Heart left ventricle (tissue), 16 donors: ENCODE measurements at regions of chr2 and their contacts with region 1.

Region 1: DNA sequence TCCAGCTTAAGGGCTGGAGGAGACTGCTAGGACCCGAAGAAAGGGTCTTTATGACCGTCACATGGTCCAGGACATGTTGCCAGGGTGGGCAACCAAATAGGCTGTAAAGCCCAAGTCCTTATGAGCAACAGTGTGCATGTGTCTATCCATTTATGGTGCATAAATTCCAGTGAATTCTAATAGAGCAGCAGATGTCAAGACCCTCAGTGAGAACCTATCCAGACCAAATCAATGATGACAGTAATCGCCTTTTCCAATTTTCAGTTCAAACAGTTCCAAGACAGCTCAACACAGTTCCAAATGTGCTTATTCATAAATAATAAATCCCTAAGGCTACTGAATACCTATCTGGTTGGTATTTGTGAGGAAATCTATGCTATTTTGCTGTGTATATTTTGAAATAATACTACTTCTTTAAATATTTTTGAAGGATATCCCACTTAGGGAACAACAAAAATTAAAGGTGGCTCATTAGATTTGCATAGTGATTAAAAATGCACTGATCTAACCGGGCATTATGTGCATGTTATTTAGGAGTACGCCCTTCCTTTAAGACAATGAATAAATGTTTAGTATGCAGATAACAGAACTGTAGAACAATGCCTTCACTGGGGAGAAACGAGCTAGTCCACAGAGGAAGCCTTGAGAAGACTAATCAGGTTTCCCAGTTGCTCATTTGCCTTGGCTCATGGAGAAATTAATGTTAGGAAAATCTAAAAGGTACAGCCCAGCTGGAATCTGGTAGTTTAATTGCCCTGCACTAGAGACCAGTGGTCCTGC is 519.5 kb upstream of the CHAC2 start:
- DNase-seq: no peak
- ATAC-seq: peak; percentile 42 to 90 (median 66)
- H3K4me3 ChIP-seq: no peak overlapping the region
- H3K27ac ChIP-seq: peak overlapping the region in 8 of 12 donors; percentile 8 to 70 (median 48)
- H3K4me1 ChIP-seq: peaks cover 0 to 11% (median 0%) of the 10 kb centered on the region in 12 donors
- H3K27me3 ChIP-seq: no peaks in the 10 kb centered on the region
- CTCF ChIP-seq: no peak
- POLR2A ChIP-seq: no peak

Region 2: GRCh38 chr2:53170466-53170865 is 77.7 kb before region 1 on chr2:
- intact Hi-C with region 1: loop called in 1 of 10 experiments (anchors 5 kb)
- DNase-seq: no peak
- ATAC-seq: peak in 3 of 4 donors; percentile 13 to 72 (median 32)
- H3K4me3 ChIP-seq: no peak overlapping the region
- H3K27ac ChIP-seq: peak overlapping the region in 1 of 12 donors; percentile 32
- H3K4me1 ChIP-seq: peaks cover 0 to 12% (median 0%) of the 10 kb centered on the region in 12 donors
- H3K27me3 ChIP-seq: no peaks in the 10 kb centered on the region
- CTCF ChIP-seq: no peak
- POLR2A ChIP-seq: no peak

Region 3: DNA sequence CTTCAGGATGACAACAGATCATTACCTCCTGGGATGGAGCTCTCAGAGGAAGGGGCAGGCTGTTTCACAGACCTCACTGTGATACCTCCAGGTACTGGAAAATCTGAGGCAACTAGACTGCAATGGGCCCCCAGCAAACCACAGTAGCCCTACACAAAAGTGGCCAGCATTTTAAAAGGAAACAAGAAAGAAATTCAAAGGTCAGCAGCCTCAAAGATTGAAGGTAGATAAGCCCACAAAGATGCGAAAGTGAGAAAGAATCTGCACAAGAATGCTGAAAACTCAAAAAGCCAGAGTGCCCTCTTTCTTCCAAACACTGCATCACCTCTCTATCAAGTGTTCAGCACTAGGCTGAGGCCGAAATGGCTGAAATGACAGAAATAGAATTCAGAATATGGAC is 19.9 kb after region 1 on chr2:
- intact Hi-C with region 1: no loop called
- DNase-seq: no peak
- ATAC-seq: no peak
- H3K4me3 ChIP-seq: no peak overlapping the region
- H3K27ac ChIP-seq: no peak overlapping the region
- H3K4me1 ChIP-seq: no peaks in the 10 kb centered on the region
- H3K27me3 ChIP-seq: no peaks in the 10 kb centered on the region
- CTCF ChIP-seq: peak in 3 of 12 donors; percentile 6 to 36 (median 20)
- POLR2A ChIP-seq: no peak

Region 4: DNA sequence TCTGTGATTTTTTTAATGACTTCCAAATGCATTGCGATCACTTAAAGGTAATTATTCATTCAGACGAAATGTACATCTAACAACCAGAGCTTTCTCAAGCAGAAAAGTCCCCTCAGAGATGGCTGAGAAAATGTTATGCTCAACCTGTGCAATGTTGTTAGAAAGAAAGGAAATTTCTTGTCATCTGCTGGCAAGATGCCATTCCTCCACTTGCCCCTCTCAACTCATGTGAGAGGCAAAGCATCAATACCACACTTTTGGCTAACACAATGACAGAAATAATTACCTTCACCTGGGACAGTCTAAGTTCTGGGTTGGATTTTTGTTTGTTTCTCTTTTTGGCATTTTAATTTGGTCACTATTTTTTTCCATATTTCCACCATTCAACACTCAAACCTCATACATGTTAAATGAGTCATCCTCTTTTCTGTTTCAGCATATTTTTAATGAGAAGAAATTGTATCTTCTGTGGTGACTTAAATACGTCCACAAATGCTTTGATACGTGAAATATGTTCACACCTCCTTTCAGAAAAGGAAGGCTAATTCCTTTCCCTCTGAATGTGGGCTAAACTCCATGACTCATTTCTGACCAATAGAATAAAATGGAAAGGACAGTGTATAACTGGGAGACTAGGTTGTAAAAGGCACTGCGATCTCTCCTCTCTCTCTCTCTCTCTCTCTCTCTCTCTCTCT is 345.9 kb after region 1 on chr2:
- intact Hi-C with region 1: no loop called
- DNase-seq: no peak
- ATAC-seq: peak in 1 of 4 donors; percentile 47
- H3K4me3 ChIP-seq: no peak overlapping the region
- H3K27ac ChIP-seq: no peak overlapping the region
- H3K4me1 ChIP-seq: no peaks in the 10 kb centered on the region
- H3K27me3 ChIP-seq: no peaks in the 10 kb centered on the region
- CTCF ChIP-seq: no peak
- POLR2A ChIP-seq: no peak

Region 5: DNA sequence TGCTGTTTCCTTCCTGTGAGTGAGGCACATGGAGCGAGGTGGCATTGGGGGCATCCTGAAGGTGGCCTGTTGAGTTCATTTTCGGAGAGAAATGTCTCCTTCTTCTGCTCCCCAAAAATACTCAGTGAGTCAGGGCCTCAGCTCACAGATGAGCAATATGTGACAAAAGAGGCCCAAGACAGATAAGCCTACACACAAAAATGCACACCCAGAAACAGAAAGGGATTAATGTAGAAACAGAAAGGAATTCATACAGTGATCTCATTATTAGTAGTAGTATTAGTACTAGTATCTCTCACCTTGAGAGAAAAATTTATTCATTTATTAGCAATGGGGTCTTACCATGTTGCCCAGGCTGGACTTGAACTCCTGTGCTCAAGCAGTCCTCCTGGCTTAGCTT is 606.5 kb after region 1 on chr2:
- intact Hi-C with region 1: no loop called
- DNase-seq: no peak
- ATAC-seq: no peak
- H3K4me3 ChIP-seq: no peak overlapping the region
- H3K27ac ChIP-seq: no peak overlapping the region
- H3K4me1 ChIP-seq: peaks cover 0 to 2% (median 0%) of the 10 kb centered on the region in 12 donors
- H3K27me3 ChIP-seq: no peaks in the 10 kb centered on the region
- CTCF ChIP-seq: no peak
- POLR2A ChIP-seq: no peak